Activated CD4-positive, alpha-beta T cell treated with anti-CD3 and anti-CD28 coated beads, Interleukin-2, amount 10 ng/mL, durations not matched to agents 7 days and 5 days (primary cell): ENCODE measurements at regions of chr10 and their contacts with region 1.

Region 1: DNA sequence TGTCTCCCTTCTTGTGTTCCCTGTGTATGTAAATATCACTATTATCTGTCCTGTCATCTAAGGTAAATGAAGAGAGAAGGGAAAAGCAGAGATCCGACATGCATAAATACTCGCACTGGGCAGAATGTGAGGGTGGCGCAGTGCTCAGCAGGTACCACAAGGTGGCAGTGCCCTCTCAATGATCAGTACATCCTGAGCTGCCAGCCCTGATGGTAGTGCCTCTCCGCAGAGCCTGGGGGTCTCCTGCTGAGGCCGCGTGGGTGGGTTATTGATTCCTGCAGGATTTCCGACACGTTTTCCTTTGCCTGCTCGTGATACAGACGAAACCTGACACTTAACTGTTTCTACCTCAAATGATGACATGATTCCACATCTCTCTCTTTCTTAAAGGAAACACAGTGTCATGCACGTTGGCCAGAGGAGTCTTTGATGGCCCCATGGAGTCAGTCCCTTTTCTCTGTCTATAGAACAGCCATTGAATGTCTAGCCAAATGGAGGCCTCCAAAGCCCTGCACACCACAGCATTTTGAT is 19.8 kb downstream of the RGR start:
- DNase-seq: peak; percentile 76
- H3K4me3 Mint-ChIP-seq: no peak overlapping the region
- H3K27ac Mint-ChIP-seq: no peak overlapping the region
- H3K4me1 Mint-ChIP-seq: peaks cover 19% of the 10 kb centered on the region
- H3K27me3 Mint-ChIP-seq: peaks cover 17% of the 10 kb centered on the region

Region 2: GRCh38 chr10:84156768-84157167 is 107.9 kb before region 1 on chr10:
- CTCF ChIA-PET with region 1: no interaction called
- POLR2A ChIA-PET with region 1: no interaction called
- DNase-seq: no peak
- H3K4me3 Mint-ChIP-seq: no peak overlapping the region
- H3K27ac Mint-ChIP-seq: no peak overlapping the region
- H3K4me1 Mint-ChIP-seq: peaks cover 10% of the 10 kb centered on the region
- H3K27me3 Mint-ChIP-seq: peaks cover 2% of the 10 kb centered on the region

Region 3: GRCh38 chr10:84290235-84290634 is 25.6 kb after region 1 on chr10:
- CTCF ChIA-PET with region 1: interaction called, 10 read pairs
- POLR2A ChIA-PET with region 1: no interaction called
- DNase-seq: no peak
- H3K4me3 Mint-ChIP-seq: no peak overlapping the region
- H3K27ac Mint-ChIP-seq: no peak overlapping the region
- H3K4me1 Mint-ChIP-seq: peaks cover 27% of the 10 kb centered on the region
- H3K27me3 Mint-ChIP-seq: peaks cover 26% of the 10 kb centered on the region

Region 4: GRCh38 chr10:84333864-84334451 is 69.3 kb after region 1 on chr10:
- CTCF ChIA-PET with region 1: interaction called, 12 read pairs
- POLR2A ChIA-PET with region 1: interaction called, 3 read pairs
- DNase-seq: peak; percentile 81
- H3K4me3 Mint-ChIP-seq: peak overlapping the region; percentile 36
- H3K27ac Mint-ChIP-seq: peak overlapping the region; percentile 84
- H3K4me1 Mint-ChIP-seq: peaks cover 49% of the 10 kb centered on the region
- H3K27me3 Mint-ChIP-seq: no peaks in the 10 kb centered on the region

Region 5: GRCh38 chr10:84537447-84537931 is 272.8 kb after region 1 on chr10:
- CTCF ChIA-PET with region 1: interaction called, 21 read pairs
- POLR2A ChIA-PET with region 1: interaction called, 3 read pairs
- DNase-seq: peak; percentile 48
- H3K4me3 Mint-ChIP-seq: no peak overlapping the region
- H3K27ac Mint-ChIP-seq: no peak overlapping the region
- H3K4me1 Mint-ChIP-seq: peaks cover 15% of the 10 kb centered on the region
- H3K27me3 Mint-ChIP-seq: peaks cover 12% of the 10 kb centered on the region